Activated naive CD4-positive, alpha-beta T cell treated with anti-CD3 and anti-CD28 coated beads for 36 hours (primary cell): ENCODE measurements at regions of chr2 and their contacts with region 1.

Region 1: DNA sequence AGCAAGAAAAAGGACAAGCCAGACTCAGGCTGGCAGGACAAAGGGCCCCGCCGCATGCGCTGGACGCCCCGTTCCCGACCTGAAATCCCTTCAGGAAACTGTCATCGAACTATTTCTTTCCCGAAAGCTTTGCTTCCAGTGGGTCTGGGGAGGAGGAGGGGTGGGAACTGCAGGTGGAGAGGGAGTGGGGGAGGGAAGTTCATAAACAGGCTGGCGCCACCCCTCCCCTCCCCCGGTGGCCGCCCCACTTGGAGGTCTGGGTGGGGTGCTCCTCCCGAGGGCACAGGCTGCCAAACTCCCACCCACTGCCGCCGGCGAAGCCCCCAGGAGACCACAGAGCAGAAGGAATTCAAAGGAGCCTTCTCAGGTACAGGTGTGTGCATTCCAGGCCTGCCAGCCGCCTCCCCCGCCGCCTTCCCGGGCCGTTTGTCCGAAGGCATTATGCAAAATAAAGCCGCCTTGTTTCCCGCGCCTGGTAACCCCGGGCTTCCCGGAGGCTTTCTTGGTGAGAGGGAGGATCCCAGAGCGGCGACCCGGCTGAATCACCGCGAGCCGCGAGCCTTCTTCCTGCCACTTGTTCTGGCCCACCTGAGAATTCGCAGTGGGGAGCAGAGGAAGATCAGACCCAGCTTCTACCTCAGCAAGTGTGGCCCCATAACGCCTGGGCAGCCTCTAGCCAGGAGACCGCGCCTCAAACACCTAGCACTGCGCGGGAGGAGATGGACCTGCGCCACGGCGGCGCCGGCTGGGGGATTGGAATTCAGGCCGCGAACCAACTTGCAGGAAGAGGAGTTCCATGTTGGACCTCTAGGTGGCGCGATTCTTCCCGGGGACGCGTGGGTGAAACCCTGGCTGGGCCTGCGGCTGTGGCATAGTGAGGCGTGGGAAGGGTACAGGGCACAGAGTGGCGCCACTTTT is 101.9 kb downstream of the FOXI3 start:
- DNase-seq: peak; percentile 84
- H3K4me3 Mint-ChIP-seq: peak overlapping the region; percentile 60
- H3K27ac Mint-ChIP-seq: no peak overlapping the region
- H3K4me1 Mint-ChIP-seq: no peaks in the 10 kb centered on the region
- H3K27me3 Mint-ChIP-seq: peaks cover 27% of the 10 kb centered on the region

Region 2: DNA sequence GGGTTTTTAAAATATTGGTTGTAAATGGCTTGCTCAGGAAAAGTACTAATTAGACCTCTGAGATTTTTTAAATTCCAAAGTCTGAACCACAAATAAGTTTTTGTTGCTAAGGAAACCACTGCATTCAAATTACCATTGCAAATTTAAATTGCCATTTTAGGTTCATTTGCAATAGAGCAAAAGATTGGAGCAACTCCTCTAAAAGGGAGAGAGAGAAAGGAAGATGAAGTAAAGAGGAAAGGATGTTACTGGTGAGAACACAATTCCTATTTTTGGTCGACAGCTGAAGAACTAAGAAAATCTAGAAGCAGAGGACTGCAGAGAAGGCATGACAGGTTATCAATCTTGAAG is 27.0 kb after region 1 on chr2:
- CTCF ChIA-PET with region 1: no interaction called
- intact Hi-C with region 1: no loop called
- DNase-seq: no peak
- H3K4me3 Mint-ChIP-seq: no peak overlapping the region
- H3K27ac Mint-ChIP-seq: no peak overlapping the region
- H3K4me1 Mint-ChIP-seq: no peaks in the 10 kb centered on the region
- H3K27me3 Mint-ChIP-seq: peaks cover 14% of the 10 kb centered on the region

Region 3: DNA sequence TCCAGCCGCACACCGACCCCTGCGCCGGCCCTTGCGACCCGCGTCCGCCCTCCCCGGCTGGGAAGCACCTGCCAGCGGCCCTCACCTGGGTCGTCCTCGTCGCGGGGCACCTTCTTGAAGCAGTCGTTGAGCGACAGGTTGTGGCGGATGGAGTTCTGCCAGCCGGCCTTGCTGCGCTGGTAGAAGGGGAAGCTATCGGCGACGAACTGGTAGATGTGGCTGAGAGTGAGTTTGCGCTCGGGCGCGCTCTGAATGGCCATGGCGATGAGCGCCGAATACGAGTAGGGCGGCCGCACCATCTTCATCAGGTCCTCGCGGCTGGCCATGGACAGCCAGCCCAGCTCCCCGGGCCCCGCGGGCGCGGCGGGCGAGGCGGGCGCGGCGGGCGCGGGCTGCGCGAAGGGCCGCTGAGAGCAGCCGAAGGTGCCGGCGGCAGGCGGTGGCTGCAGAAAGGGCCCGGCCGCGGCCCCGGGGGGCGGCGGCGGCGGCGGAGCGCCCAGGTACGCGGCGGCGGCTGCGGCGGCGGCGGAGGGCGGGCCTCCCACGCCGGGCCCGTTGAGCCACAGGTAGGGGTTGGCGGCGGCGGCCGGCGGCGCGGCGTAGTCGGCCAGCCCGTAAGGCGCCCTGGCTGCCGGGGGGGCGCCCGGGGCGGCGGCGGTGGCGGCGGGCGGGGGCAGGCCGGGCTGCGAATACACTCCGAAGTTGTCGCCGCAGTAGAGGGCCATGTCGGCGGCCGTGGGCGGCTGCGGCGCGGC is 101.4 kb after region 1 on chr2:
- CTCF ChIA-PET with region 1: no interaction called
- intact Hi-C with region 1: loop called (anchors 2 kb)
- DNase-seq: peak; percentile 23
- H3K4me3 Mint-ChIP-seq: peak overlapping the region; percentile 63
- H3K27ac Mint-ChIP-seq: no peak overlapping the region
- H3K4me1 Mint-ChIP-seq: peaks cover 5% of the 10 kb centered on the region
- H3K27me3 Mint-ChIP-seq: peaks cover 59% of the 10 kb centered on the region

Region 4: DNA sequence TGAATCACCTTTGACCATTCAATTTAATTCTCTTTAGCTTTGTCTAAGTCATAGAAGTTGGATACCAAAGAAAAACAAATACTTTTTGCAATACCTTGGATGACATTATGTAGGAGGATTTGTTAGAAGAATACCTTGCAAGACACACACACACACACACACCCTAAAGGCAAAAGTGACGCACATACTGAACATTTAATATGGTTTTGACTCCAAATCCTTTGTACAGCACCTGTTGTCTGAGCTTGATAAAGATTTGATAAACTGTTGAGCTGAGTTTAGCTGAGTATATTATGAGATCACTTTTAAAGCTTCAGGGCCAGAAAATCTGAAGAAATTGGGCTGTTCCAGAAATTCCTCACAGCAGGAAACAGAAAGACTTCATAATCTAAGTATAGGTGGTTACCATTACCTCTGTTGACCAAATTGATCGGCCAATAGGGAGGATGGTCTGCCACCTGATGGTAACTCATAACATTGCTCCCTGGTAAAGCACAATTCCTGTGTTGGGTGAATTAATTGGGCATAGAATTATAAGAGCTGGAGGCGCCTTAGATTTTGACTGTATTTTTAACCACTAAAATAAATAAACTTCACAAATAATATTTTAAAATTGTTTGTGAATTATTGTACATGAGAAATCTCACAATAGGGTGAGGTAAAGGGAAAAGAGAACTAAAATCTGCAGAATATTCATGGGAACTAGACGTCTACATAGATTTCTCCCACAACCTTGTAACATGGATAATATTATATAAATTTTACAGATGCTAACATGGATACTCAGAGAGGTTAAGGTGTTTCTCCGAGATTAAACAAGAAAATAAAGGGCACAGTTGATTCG is 319.0 kb after region 1 on chr2:
- CTCF ChIA-PET with region 1: interaction called, 3 read pairs
- intact Hi-C with region 1: loop called (anchors 5 kb)
- DNase-seq: peak; percentile 55
- H3K4me3 Mint-ChIP-seq: no peak overlapping the region
- H3K27ac Mint-ChIP-seq: no peak overlapping the region
- H3K4me1 Mint-ChIP-seq: no peaks in the 10 kb centered on the region
- H3K27me3 Mint-ChIP-seq: no peaks in the 10 kb centered on the region